Pancreas (tissue), 10 donors: ENCODE measurements at regions of chr1 and their contacts with region 1.

Region 1: DNA sequence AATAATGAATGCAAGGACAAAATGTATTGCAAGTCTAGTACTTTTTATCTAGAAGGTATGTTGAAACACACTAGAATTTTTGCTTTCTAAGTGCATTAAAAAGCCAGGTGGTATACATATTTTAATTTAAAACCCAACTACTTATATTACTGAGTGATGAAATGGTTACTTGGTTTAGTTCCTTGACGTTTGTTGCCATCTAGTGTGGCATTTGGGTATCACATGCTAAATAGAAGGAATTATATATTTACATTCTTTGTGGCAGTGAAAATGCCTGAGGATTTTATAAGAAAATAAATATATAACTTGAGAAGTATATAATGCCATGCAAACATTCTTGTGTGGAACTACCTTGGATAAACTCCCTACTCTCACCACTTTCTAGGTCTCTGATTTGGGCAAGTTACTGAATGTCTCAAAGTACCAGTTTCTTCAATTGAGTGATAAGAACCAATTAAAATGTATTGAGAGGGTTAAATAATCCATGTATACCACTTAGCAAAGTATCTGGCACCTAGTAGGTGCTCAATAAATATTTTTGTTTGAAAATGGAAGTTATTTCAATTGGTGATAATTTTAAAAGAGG is 69.6 kb downstream of the SDCCAG8 start:
- DNase-seq: no peak
- ATAC-seq: peak in 3 of 4 donors; percentile 84 to 87 (median 87)
- H3K4me3 ChIP-seq: no peak overlapping the region
- H3K27ac ChIP-seq: no peak overlapping the region
- H3K4me1 ChIP-seq: no peaks in the 10 kb centered on the region
- H3K27me3 ChIP-seq: no peaks in the 10 kb centered on the region
- CTCF ChIP-seq: peak; percentile 17 to 59 (median 58)

Region 2: DNA sequence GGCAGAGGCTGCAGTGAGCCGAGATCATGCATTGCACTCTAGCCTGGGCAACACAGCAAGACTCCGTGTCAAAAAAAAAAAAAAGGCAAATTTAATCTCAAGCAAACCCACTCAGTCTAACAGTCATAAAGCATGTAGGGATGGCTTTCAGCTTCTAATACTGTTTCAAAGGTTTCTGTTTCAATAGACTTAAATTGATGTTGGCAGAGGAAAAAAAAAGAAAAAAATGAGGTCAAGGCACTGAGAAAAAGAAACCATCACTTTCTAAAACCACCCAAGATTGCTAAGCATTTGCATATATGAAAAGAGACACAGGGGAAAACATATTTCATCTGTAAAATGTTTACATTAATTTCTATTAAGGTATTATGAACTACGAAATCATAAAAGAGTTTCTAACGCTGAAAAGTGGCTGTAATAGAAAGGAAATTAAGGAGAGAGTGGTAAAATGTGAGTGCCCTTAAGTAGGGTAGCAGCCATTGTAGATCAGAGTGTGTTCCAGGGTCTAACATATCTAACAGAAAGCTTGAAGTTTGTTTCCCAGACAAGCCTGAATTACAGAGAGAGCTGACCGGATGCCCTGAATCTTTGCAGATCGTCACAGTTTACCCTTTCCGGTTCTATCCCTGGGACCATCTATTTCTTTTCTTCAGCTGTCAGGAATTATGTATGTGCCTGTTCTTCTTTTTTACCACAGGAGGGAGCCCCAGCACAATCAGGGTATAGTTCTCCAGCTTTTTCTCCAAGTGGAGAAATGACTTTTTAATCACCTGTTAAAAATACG is 870.9 kb before region 1 on chr1:
- intact Hi-C with region 1: loop called in 1 of 3 experiments (anchors 10 kb)
- DNase-seq: no peak
- ATAC-seq: peak in 3 of 4 donors; percentile 58 to 74 (median 61)
- H3K4me3 ChIP-seq: no peak overlapping the region
- H3K27ac ChIP-seq: no peak overlapping the region
- H3K4me1 ChIP-seq: no peaks in the 10 kb centered on the region
- H3K27me3 ChIP-seq: no peaks in the 10 kb centered on the region
- CTCF ChIP-seq: peak; percentile 28 to 45 (median 42)

Region 3: DNA sequence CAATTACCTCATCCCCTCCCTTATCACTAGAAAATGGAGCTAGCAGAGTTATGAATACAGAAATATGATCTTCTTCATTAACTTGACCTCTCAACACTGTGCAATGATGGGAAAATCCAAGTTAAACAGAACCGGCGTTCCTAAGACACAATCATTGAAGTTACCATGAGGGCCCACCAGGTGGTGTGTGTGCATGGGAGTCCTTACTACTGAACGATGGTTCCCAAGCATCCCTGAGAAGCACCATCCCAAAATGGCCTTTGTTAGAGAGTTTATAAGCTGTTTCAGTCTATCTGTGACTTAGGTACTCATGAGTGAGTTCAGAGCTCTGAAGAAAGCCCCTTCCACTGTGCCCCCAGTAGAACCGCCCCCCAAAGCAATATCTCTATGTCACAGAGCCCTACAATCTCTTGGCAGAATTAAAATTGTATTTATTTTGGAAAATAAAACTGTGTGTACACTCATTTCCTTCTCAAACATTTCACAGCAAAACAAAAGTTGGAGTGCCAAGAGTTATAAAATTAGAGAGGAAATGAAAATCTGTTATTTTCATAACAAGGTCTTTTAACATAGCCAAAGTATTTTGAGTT is 857.7 kb before region 1 on chr1:
- intact Hi-C with region 1: loop called in 1 of 3 experiments (anchors 10 kb)
- DNase-seq: peak in 2 of 6 donors; percentile 4 to 30
- ATAC-seq: peak in 3 of 4 donors; percentile 77 to 86 (median 81)
- H3K4me3 ChIP-seq: no peak overlapping the region
- H3K27ac ChIP-seq: no peak overlapping the region
- H3K4me1 ChIP-seq: no peaks in the 10 kb centered on the region
- H3K27me3 ChIP-seq: no peaks in the 10 kb centered on the region
- CTCF ChIP-seq: peak; percentile 24 to 44 (median 37)

Region 4: GRCh38 chr1:243731301-243731891 is 406.0 kb after region 1 on chr1:
- intact Hi-C with region 1: no loop called
- DNase-seq: peak in 3 of 6 donors; percentile 23 to 53 (median 33)
- ATAC-seq: peak; percentile 60 to 93 (median 86)
- H3K4me3 ChIP-seq: no peak overlapping the region
- H3K27ac ChIP-seq: peak overlapping the region in 2 of 4 donors; percentile 34 to 37
- H3K4me1 ChIP-seq: no peaks in the 10 kb centered on the region
- H3K27me3 ChIP-seq: no peaks in the 10 kb centered on the region
- CTCF ChIP-seq: no peak